ENCODE measurements at regions of chr11 and their contacts with region 1.

Region 1: DNA sequence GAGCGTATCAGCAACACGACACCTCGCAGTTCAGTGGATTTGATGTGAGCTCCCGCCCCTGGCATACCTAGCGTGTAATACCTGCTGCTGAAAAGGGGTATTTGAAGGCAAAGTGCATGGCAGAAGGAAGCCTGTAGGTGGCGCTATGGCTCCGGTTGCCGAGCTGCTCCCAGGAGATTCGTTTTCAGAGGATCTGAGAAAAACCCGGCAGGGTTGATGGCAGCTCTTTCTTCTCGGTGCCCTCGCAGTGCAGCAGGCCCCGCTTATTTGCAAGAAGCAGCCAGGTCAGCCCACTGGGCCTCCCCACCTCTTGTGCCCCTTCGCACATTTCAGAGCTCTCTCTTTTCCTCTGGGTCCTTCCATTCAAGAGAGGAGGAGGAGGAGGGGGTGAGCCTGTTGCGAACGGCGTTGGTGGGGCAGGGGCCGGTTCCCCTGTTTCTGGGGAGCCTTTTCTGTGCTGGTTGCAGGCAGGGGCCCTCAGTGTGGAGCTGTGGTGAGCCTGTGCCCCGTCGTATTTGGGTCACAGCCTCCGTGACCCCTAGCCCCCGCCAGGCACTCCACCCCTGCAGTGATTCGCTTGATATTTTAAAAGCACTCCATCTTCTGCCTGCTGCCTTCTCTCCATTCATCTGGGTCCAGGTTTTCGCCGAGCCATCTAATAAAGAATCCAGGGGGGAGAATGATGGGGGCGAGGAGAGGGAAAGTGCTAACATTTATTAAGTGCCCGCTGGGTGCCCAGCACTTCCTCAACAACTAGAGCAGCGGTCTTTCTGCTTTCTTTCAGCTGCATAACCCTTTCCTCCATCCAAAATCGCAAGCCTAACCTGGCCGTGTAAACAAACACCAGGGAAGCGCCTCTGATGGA is 85.3 kb upstream of the SYT13 start:
- DNase-seq: peak; percentile 81
- H3K4me3 Mint-ChIP-seq: no peak overlapping the region
- H3K27ac Mint-ChIP-seq: no peak overlapping the region
- H3K4me1 Mint-ChIP-seq: peaks cover 21% of the 10 kb centered on the region
- H3K27me3 Mint-ChIP-seq: peaks cover 3% of the 10 kb centered on the region

Region 2: DNA sequence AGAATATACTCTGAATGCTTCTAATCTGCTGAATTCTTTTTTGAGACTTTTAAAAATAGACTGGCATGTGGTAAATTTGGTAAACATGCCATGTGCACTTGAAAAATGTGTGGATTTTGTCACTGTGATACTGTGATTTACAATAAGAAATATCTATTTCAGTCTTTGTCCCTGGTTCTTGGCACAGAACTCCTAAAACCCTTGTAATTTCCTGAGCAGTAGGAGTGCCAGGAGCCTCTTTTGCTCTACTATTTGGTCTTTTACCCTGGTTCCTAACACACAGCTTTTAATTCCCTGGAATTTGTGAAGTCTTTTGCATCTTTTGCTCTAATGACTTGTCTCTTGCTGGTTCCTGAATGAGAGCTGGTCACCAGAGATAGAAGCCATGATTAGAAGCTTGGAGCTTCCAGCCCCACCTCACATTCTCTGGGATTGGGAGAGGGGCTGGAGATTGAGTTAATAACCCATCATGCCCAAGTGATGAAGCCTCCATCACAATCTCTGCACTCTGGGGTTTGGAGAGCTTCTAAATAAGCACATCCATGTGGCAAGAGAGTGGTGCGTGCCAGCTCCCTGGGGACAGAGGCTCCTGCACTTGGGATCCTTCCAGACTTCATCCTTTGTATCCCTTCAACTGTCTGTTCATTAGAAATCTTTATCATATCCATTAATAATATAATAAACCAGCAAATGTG is 58.2 kb before region 1 on chr11:
- CTCF ChIA-PET with region 1: no interaction called
- POLR2A ChIA-PET with region 1: no interaction called
- intact Hi-C with region 1: no loop called
- DNase-seq: no peak
- H3K4me3 Mint-ChIP-seq: no peak overlapping the region
- H3K27ac Mint-ChIP-seq: no peak overlapping the region
- H3K4me1 Mint-ChIP-seq: no peaks in the 10 kb centered on the region
- H3K27me3 Mint-ChIP-seq: peaks cover 8% of the 10 kb centered on the region

Region 3: GRCh38 chr11:45339729-45340519 is 31.6 kb before region 1 on chr11:
- CTCF ChIA-PET with region 1: interaction called, 12 read pairs
- POLR2A ChIA-PET with region 1: no interaction called
- intact Hi-C with region 1: no loop called
- DNase-seq: peak; percentile 95
- H3K4me3 Mint-ChIP-seq: peak overlapping the region; percentile 62
- H3K27ac Mint-ChIP-seq: no peak overlapping the region
- H3K4me1 Mint-ChIP-seq: peaks cover 16% of the 10 kb centered on the region
- H3K27me3 Mint-ChIP-seq: peaks cover 11% of the 10 kb centered on the region

Region 4: GRCh38 chr11:45354976-45355705 is 16.3 kb before region 1 on chr11:
- CTCF ChIA-PET with region 1: interaction called, 28 read pairs
- POLR2A ChIA-PET with region 1: no interaction called
- intact Hi-C with region 1: no loop called
- DNase-seq: peak; percentile 93
- H3K4me3 Mint-ChIP-seq: peak overlapping the region; percentile 76
- H3K27ac Mint-ChIP-seq: peak overlapping the region; percentile 47
- H3K4me1 Mint-ChIP-seq: peaks cover 17% of the 10 kb centered on the region
- H3K27me3 Mint-ChIP-seq: no peaks in the 10 kb centered on the region

Region 5: GRCh38 chr11:45383224-45383623 is 11.7 kb after region 1 on chr11:
- CTCF ChIA-PET with region 1: interaction called, 22 read pairs
- POLR2A ChIA-PET with region 1: no interaction called
- intact Hi-C with region 1: no loop called
- DNase-seq: peak; percentile 21
- H3K4me3 Mint-ChIP-seq: no peak overlapping the region
- H3K27ac Mint-ChIP-seq: no peak overlapping the region
- H3K4me1 Mint-ChIP-seq: peaks cover 25% of the 10 kb centered on the region
- H3K27me3 Mint-ChIP-seq: no peaks in the 10 kb centered on the region

Region 6: GRCh38 chr11:45655347-45655756 is 283.9 kb after region 1 on chr11:
- CTCF ChIA-PET with region 1: interaction called, 128 read pairs
- POLR2A ChIA-PET with region 1: interaction called, 8 read pairs
- intact Hi-C with region 1: loop called (anchors 1 kb)
- DNase-seq: peak; percentile 76
- H3K4me3 Mint-ChIP-seq: no peak overlapping the region
- H3K27ac Mint-ChIP-seq: no peak overlapping the region
- H3K4me1 Mint-ChIP-seq: no peaks in the 10 kb centered on the region
- H3K27me3 Mint-ChIP-seq: peaks cover 23% of the 10 kb centered on the region

Measured in activated CD4-positive, alpha-beta memory T cell treated with anti-CD3 and anti-CD28 coated beads for 36 hours (primary cell).